PC-9 (cell line): ENCODE measurements at regions of chr12 and their contacts with region 1.

Region 1: GRCh38 chr12:18430425-18431048 is 169.2 kb downstream of the PIK3C2G start:
- DNase-seq: peak in 1 of 2 experiments; percentile 39
- H3K4me3 ChIP-seq: no peak overlapping the region
- H3K27ac ChIP-seq: no peak overlapping the region
- H3K4me1 ChIP-seq: peaks cover 3% of the 10 kb centered on the region
- H3K27me3 ChIP-seq: no peaks in the 10 kb centered on the region
- CTCF ChIP-seq: peak; percentile 84

Region 2: DNA sequence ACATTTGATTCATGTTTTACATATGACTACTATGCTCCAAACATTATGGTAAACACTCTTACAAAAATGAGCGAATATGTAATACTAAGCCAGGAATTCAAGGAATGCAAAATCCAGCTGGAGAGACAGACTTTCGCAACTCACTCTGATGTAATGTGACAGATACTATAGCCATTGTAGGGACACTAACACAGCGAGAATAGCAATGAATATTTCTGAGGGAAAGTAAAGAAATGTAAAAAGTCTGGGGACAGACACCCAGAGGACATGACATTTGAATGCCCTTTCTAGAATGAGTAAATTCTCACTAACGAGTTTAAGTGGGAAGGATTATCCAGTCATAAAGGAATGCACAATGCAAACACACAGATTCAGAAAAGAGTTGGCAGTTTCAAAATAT is 47.3 kb before region 1 on chr12:
- CTCF ChIA-PET with region 1: no interaction called
- POLR2A ChIA-PET with region 1: no interaction called
- intact Hi-C with region 1: loop called (anchors 1 kb)
- DNase-seq: peak; percentile 37 to 64
- H3K4me3 ChIP-seq: no peak overlapping the region
- H3K27ac ChIP-seq: peak overlapping the region; percentile 45
- H3K4me1 ChIP-seq: peaks cover 13% of the 10 kb centered on the region; the same call in 1 of the 2 replicates
- H3K27me3 ChIP-seq: no peaks in the 10 kb centered on the region
- CTCF ChIP-seq: no peak

Region 3: GRCh38 chr12:18723756-18724155 is 293.2 kb after region 1 on chr12:
- CTCF ChIA-PET with region 1: no interaction called
- POLR2A ChIA-PET with region 1: no interaction called
- intact Hi-C with region 1: loop called (anchors 5 kb)
- DNase-seq: peak; percentile 39 to 74
- H3K4me3 ChIP-seq: no peak overlapping the region
- H3K27ac ChIP-seq: no peak overlapping the region
- H3K4me1 ChIP-seq: peaks cover 4% of the 10 kb centered on the region; the same call in 1 of the 2 replicates
- H3K27me3 ChIP-seq: no peaks in the 10 kb centered on the region
- CTCF ChIP-seq: no peak

Region 4: GRCh38 chr12:18861287-18861858 is 430.8 kb after region 1 on chr12:
- CTCF ChIA-PET with region 1: no interaction called
- POLR2A ChIA-PET with region 1: no interaction called
- intact Hi-C with region 1: loop called (anchors 1 kb)
- DNase-seq: no peak
- H3K4me3 ChIP-seq: no peak overlapping the region
- H3K27ac ChIP-seq: no peak overlapping the region
- H3K4me1 ChIP-seq: no peaks in the 10 kb centered on the region
- H3K27me3 ChIP-seq: no peaks in the 10 kb centered on the region
- CTCF ChIP-seq: peak; percentile 82

Region 5: GRCh38 chr12:18998343-18999261 is 568.1 kb after region 1 on chr12:
- CTCF ChIA-PET with region 1: no interaction called
- POLR2A ChIA-PET with region 1: no interaction called
- intact Hi-C with region 1: loop called (anchors 1 kb)
- DNase-seq: peak in 1 of 2 experiments; percentile 30
- H3K4me3 ChIP-seq: no peak overlapping the region
- H3K27ac ChIP-seq: peak overlapping the region; percentile 46; the same call in 1 of the 2 replicates
- H3K4me1 ChIP-seq: peaks cover 11% of the 10 kb centered on the region
- H3K27me3 ChIP-seq: no peaks in the 10 kb centered on the region
- CTCF ChIP-seq: no peak

Region 6: GRCh38 chr12:19186722-19187661 is 756.5 kb after region 1 on chr12:
- CTCF ChIA-PET with region 1: interaction called, 11 read pairs
- POLR2A ChIA-PET with region 1: no interaction called
- intact Hi-C with region 1: loop called (anchors 1 kb)
- DNase-seq: peak in 1 of 2 experiments; percentile 42
- H3K4me3 ChIP-seq: no peak overlapping the region
- H3K27ac ChIP-seq: no peak overlapping the region
- H3K4me1 ChIP-seq: no peaks in the 10 kb centered on the region
- H3K27me3 ChIP-seq: no peaks in the 10 kb centered on the region
- CTCF ChIP-seq: peak; percentile 83